ENCODE measurements at regions of chr19 and their contacts with region 1.

Region 1: DNA sequence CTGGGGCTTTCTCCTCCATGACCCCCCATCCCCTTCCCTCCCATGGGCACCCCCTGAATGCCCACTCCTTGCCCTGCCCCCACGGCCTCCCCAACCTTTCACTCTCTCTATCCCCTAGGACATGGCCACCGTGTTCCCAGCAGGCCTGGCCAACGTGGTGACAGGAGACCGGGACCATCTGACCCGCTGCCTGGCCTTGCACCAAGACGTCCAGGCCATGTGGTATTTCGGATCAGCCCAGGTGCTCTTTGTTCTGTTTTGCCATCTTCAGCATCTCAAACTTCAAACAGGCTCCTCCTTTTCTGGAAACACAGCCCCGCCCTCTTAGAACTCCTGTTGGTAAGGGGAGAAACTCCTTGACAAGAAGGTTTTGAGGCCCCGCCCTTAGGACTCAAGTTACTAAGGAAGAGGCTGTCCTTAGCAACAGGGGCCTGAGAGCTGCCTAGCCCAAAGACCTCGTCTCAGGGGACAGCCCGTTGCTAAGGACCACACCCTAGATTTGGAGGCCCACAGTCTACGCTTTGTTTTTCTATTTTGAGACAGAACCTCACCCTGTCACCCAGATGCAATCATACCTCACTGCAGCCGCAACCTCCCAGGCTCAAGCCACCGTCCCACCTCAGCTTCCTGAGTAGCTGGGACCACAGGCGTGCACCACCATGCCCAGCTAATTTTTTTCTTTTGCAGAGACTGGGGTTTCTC is 5.1 kb upstream of the FLT3LG start:
- DNase-seq: peak; percentile 92
- H3K4me3 Mint-ChIP-seq: peak overlapping the region; percentile 68
- H3K27ac Mint-ChIP-seq: peak overlapping the region; percentile 96
- H3K4me1 Mint-ChIP-seq: peaks cover 43% of the 10 kb centered on the region
- H3K27me3 Mint-ChIP-seq: no peaks in the 10 kb centered on the region

Region 2: DNA sequence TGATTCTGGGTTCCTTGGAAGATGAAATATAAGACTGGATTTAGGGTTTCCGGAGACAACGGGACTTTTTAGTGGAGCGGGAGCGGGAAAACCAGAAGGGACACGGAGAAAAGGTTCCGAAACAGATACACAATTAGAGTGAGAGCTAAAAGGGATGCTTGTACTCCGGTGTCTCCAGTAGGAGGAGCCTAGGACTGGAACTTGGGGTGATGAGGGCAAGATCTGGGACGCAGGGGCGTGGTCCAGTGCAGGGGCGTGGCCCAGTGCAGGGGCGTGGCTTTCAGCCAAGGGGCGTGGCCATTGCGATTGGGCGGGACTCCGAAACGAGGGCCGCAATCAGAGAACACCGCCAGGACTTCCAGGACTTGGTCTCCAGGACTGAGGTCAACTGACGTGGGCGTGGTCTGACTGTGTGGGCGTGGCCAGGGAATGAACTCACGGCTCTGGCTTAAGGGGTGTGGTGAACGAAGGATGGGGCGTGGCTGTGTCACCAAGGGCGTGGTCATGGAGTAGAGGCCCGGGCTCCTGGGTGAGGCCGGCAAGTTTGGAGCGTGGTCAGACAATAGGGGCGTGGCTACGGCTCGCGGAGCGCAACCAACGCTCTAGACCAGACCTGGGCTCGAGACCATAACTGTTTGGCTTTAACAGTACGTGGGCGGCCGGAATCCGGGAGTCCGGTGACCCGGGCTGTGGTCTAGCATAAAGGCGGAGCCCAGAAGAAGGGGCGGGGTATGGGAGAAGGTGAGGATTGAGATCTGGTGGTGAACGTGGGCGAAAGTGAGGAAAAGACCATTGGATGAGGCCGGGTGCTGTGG is 105.4 kb before region 1 on chr19 and contains the start of gene DKKL1:
- CTCF ChIA-PET with region 1: no interaction called
- POLR2A ChIA-PET with region 1: no interaction called
- intact Hi-C with region 1: loop called (anchors 1 kb)
- DNase-seq: peak; percentile 93
- H3K4me3 Mint-ChIP-seq: no peak within 1 kb of the TSS
- H3K27ac Mint-ChIP-seq: no peak within 1 kb of the TSS
- H3K4me1 Mint-ChIP-seq: peaks cover 4% of the 10 kb centered on the region
- H3K27me3 Mint-ChIP-seq: peaks cover 14% of the 10 kb centered on the region
- total RNA-seq, gene DKKL1: not detected

Region 3: GRCh38 chr19:49391581-49392399 is 77.1 kb before region 1 on chr19:
- CTCF ChIA-PET with region 1: interaction called, 40 read pairs
- POLR2A ChIA-PET with region 1: no interaction called
- intact Hi-C with region 1: loop called (anchors 1 kb)
- DNase-seq: peak; percentile 86
- H3K4me3 Mint-ChIP-seq: no peak overlapping the region
- H3K27ac Mint-ChIP-seq: peak overlapping the region; percentile 30
- H3K4me1 Mint-ChIP-seq: peaks cover 19% of the 10 kb centered on the region
- H3K27me3 Mint-ChIP-seq: peaks cover 2% of the 10 kb centered on the region

Region 4: GRCh38 chr19:49443366-49444099 is 25.4 kb before region 1 on chr19:
- CTCF ChIA-PET with region 1: interaction called, 8 read pairs
- POLR2A ChIA-PET with region 1: interaction called, 3 read pairs
- intact Hi-C with region 1: loop called (anchors 2 kb)
- DNase-seq: peak; percentile 96
- H3K4me3 Mint-ChIP-seq: peak overlapping the region; percentile 74
- H3K27ac Mint-ChIP-seq: peak overlapping the region; percentile 82
- H3K4me1 Mint-ChIP-seq: peaks cover 33% of the 10 kb centered on the region
- H3K27me3 Mint-ChIP-seq: peaks cover 36% of the 10 kb centered on the region

Region 5: GRCh38 chr19:49451430-49452181 is 17.3 kb before region 1 on chr19 and contains the start of gene PIH1D1:
- CTCF ChIA-PET with region 1: interaction called, 23 read pairs
- POLR2A ChIA-PET with region 1: interaction called, 52 read pairs
- intact Hi-C with region 1: loop called (anchors 1 kb)
- DNase-seq: peak; percentile 98
- H3K4me3 Mint-ChIP-seq: peak within 1 kb of the TSS; percentile 100
- H3K27ac Mint-ChIP-seq: peak within 1 kb of the TSS; percentile 99
- H3K4me1 Mint-ChIP-seq: peaks cover 38% of the 10 kb centered on the region
- H3K27me3 Mint-ChIP-seq: no peaks in the 10 kb centered on the region
- total RNA-seq, gene PIH1D1: 117 to 129 TPM

Region 6: DNA sequence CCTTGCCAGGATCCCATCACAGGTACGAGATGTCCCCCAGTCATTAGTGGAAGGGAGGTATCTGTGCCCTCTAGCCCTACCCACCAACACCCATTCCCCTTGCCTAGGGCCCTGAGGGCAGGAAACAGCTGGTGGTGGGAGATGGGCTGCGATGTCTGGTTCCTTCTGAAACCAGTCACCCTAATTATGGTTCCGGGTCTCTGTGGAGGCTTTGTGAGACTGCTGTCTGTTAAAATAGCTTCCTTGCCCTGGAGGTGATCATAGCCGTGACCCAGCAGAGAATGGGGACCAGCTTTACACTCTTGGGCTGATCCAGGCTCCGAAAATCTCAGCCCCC is 10.4 kb before region 1 on chr19:
- CTCF ChIA-PET with region 1: interaction called, 23 read pairs
- POLR2A ChIA-PET with region 1: interaction called, 52 read pairs
- intact Hi-C with region 1: loop called (anchors 1 kb)
- DNase-seq: no peak
- H3K4me3 Mint-ChIP-seq: no peak overlapping the region
- H3K27ac Mint-ChIP-seq: peak overlapping the region; percentile 81
- H3K4me1 Mint-ChIP-seq: peaks cover 14% of the 10 kb centered on the region
- H3K27me3 Mint-ChIP-seq: no peaks in the 10 kb centered on the region

Region 7: GRCh38 chr19:49487277-49488045 is 18.6 kb after region 1 on chr19 and contains the start of gene RPL13A:
- CTCF ChIA-PET with region 1: interaction called, 6 read pairs
- POLR2A ChIA-PET with region 1: interaction called, 7 read pairs
- intact Hi-C with region 1: loop called (anchors 2 kb)
- DNase-seq: peak; percentile 100
- H3K4me3 Mint-ChIP-seq: peak within 1 kb of the TSS; percentile 94
- H3K27ac Mint-ChIP-seq: peak within 1 kb of the TSS; percentile 97
- H3K4me1 Mint-ChIP-seq: peaks cover 24% of the 10 kb centered on the region
- H3K27me3 Mint-ChIP-seq: peaks cover 3% of the 10 kb centered on the region
- total RNA-seq, gene RPL13A: 4,276 to 4,379 TPM

Region 8: GRCh38 chr19:49515767-49516166 is 46.9 kb after region 1 on chr19:
- CTCF ChIA-PET with region 1: no interaction called
- POLR2A ChIA-PET with region 1: no interaction called
- intact Hi-C with region 1: no loop called
- DNase-seq: no peak
- H3K4me3 Mint-ChIP-seq: no peak overlapping the region
- H3K27ac Mint-ChIP-seq: no peak overlapping the region
- H3K4me1 Mint-ChIP-seq: peaks cover 27% of the 10 kb centered on the region
- H3K27me3 Mint-ChIP-seq: no peaks in the 10 kb centered on the region